ENCODE measurements at regions of chr21 and their contacts with region 1.

Region 1: DNA sequence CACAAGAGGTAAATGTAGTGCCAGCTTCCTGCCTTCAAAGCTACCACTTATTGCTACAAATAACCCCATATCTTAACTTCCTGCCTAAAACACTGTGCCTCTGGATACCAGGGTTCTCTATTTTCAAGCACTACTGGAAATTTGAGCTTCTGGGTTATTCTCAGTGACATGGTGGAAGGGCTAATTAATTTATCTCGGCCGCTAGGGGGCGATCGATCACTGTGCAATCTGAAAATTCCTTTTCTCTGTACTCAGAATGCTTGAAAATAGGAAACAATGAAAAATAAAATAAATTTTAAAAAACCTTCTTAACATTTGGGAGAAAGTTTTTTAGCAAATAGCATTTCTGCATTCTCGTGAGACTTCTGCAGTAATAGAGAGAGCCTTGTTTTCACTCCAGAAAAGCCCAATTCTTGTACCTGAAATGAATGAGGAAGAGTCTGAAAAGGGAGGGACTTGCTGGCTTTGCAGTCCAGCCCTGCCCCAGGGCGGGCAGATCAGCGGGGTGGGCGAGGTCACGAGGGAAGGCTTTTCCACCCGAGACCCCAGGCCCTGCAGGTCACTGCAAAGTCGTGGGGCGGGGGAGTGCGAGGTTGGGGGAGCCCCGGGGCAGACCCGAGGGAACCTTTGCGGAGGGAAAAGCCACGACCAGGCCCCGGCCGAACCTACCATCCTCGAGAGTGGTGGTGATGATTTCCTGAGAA is 276.7 kb downstream of the PCP4 start:
- DNase-seq: peak; percentile 55
- H3K4me3 ChIP-seq: no peak overlapping the region
- H3K27ac ChIP-seq: no peak overlapping the region
- H3K4me1 ChIP-seq: no peaks in the 10 kb centered on the region
- H3K27me3 ChIP-seq: no peaks in the 10 kb centered on the region
- CTCF ChIP-seq: peak; percentile 74

Region 2: DNA sequence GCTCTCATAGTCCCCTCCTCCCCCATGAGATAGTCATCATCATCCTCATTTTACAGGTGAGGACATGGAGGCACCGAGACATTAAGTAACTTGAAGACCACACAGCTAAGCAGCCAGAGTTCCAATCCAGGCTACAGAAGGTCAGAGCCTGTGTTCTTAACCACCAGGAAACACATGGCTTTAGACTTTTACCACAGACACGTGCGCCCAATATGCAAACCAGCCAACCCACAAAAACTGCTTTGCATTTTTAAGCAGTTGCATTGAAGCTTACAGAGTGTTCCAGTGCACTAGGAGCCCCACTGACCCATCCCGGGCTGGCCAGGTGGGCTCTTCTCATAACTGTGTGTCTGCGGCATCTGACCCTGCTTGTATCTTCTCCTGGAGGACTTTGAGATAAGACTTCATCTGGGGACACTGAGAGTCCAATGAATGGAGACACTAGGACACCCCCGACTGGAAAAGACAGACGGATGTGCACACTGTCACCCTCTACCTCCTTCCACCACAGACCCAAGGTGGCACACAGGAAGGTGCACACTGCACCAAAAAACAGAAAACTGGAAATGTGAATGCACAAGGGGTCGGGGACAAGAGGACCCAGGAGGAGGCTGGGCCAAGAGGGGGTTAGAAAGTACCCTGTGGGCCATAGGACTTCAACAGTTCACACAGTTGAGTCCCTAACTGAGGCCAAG is 1281.8 kb before region 1 on chr21:
- CTCF ChIA-PET with region 1: no interaction called
- POLR2A ChIA-PET with region 1: no interaction called
- intact Hi-C with region 1: no loop called
- DNase-seq: no peak
- H3K4me3 ChIP-seq: no peak overlapping the region
- H3K27ac ChIP-seq: no peak overlapping the region
- H3K4me1 ChIP-seq: no peaks in the 10 kb centered on the region
- H3K27me3 ChIP-seq: no peaks in the 10 kb centered on the region
- CTCF ChIP-seq: no peak

Region 3: DNA sequence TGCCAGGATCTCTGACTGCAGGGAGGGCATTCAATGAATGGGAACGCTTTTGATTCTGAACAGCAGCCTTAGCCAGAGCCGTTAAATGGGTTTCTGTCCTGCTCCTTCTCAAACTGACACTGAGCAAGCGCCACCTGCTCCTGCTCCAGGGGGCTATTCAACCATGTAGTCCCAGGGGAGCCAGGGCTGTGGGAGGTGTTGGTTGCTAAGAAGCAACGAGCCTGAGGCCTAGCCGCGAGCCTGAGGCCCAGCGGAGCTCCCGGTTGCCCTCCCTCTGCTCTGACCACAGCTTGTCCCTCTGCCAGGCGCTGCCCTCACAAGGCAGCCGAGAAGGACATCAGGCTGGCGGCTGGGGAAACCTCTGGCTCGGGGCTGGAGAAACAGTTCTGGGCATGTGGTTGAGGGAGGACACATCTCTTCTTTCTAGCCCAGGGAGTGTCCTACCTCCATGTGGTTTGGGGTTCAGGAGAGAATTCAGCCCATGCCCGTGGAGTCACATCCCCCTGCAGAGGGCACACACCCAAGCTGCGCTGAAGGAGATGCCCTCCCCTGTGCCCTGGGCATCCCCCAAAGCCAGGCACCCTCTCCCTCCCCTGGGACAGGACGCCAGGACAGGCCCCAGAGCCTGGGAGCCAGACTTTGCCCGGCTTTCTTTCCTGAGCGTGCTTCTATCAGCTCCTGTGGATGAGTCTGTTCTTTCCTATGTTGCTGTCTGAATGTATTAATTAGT is 258.7 kb before region 1 on chr21:
- CTCF ChIA-PET with region 1: no interaction called
- POLR2A ChIA-PET with region 1: no interaction called
- intact Hi-C with region 1: no loop called
- DNase-seq: no peak
- H3K4me3 ChIP-seq: no peak overlapping the region
- H3K27ac ChIP-seq: no peak overlapping the region
- H3K4me1 ChIP-seq: no peaks in the 10 kb centered on the region
- H3K27me3 ChIP-seq: peaks cover 26% of the 10 kb centered on the region
- CTCF ChIP-seq: no peak

Region 4: DNA sequence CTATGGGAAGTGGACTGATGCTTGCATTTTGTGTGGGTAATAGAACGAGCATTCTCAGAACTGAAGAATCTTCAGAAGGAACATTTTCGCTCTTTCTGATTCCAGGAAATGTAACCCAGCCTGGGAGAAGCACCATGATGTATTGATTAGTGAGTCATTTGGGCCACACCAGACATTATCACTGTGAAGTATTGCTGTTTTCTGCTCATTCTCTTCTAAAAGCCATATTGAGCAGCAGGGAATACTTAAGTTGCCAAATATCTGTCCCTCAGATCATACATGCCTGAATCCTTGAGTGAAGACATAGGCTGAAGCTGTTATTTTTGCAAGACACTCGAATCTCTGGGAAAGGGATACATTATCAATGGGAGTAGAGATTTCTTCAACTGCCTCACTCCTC is 63.6 kb before region 1 on chr21:
- CTCF ChIA-PET with region 1: no interaction called
- POLR2A ChIA-PET with region 1: no interaction called
- intact Hi-C with region 1: no loop called
- DNase-seq: no peak
- H3K4me3 ChIP-seq: no peak overlapping the region
- H3K27ac ChIP-seq: no peak overlapping the region
- H3K4me1 ChIP-seq: no peaks in the 10 kb centered on the region
- H3K27me3 ChIP-seq: no peaks in the 10 kb centered on the region
- CTCF ChIP-seq: no peak

Region 5: DNA sequence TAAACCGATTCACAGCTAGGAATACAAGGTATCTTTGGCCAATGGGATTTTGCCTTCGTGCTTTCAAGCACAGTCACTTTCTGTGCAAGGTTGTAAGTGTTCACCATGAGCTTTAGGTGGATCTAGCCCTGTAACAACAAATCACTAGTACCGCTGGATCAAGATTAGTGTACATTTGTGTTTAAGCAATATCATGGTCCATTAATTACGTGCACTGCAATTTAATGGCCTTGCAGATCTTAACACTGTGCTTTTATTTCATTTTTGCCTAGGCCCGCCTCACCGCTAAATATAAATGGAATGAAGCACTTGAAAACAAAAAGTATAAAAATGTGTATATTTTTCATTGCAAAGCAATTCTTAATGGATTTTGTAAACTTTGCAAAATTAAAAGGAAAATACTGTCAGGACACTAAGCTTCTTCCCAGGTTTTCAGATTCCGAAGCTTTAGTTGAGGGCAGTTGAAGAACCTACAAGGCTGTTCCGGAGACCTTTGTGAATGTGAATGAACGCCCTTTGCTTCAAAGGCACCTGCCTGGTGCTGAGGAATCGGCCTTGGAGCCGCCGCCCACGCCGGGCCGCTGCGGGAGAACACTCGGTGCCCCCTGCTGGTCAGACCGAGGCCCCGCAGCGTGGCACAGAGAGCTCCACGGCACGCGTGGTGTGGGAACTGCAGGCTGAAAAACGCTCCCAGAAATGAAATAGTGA is 242.1 kb after region 1 on chr21:
- CTCF ChIA-PET with region 1: interaction called, 5 read pairs
- POLR2A ChIA-PET with region 1: no interaction called
- intact Hi-C with region 1: loop called (anchors 5 kb)
- DNase-seq: peak; percentile 25
- H3K4me3 ChIP-seq: no peak overlapping the region
- H3K27ac ChIP-seq: no peak overlapping the region
- H3K4me1 ChIP-seq: no peaks in the 10 kb centered on the region
- H3K27me3 ChIP-seq: no peaks in the 10 kb centered on the region
- CTCF ChIP-seq: peak; percentile 63

Region 6: DNA sequence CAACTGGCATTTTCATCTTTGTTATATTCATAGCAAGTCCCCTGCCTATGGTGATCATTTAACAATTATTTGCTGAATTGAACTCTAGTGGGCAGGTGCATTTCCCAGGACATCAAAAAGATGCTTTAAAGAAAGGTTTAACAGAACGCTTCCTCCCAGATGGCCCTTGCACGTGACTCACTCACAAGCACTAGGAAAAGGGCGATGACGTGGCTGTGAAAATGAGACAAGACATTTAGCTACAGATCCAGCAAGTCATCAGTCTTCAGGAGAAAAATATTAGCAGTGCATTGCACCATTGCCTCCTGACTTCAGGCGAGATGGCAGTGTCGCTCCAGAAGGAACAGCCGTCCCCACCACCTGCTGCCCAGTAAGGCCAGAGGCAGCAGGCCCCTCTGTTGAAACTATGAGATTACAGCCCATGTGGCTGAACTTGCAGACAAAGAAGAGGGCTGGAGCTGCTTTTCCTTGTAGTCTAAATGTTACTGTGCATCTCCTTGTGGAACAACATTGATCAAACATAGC is 665.8 kb after region 1 on chr21:
- CTCF ChIA-PET with region 1: no interaction called
- POLR2A ChIA-PET with region 1: no interaction called
- intact Hi-C with region 1: no loop called
- DNase-seq: no peak
- H3K4me3 ChIP-seq: no peak overlapping the region
- H3K27ac ChIP-seq: no peak overlapping the region
- H3K4me1 ChIP-seq: no peaks in the 10 kb centered on the region
- H3K27me3 ChIP-seq: no peaks in the 10 kb centered on the region
- CTCF ChIP-seq: no peak

Region 7: DNA sequence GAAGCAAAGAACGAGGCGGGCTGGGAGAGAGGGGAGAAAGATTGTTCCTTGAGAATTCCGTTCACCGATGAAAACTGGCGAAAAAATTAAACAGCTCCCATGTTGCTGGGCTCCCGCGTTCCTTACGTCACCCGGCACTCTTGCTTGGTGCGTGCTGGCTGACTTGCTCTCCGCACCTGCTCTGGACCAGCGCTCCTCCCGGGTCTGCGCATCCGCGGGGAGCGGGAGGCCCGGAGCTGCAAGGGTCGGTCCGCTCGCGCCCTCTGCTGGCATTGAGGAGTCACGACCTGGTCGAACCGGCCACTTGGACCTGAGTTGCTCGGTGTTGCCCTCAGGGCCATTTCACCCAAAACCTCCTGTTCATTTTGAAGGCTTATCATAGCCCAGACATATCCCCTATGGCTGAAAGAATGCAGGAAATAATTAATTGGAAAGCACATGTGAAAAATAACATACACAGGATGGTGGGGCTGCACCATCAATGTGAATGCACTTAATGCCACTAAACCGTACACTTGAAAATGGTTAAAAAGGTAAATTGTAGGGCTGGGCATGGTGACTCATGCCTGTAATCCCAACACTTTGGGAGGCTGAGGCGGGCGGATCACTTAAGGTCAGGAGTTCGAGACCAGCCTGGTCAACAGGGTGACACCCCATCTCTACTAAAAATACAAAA is 925.1 kb after region 1 on chr21:
- CTCF ChIA-PET with region 1: no interaction called
- POLR2A ChIA-PET with region 1: no interaction called
- intact Hi-C with region 1: loop called (anchors 5 kb)
- DNase-seq: peak; percentile 56
- H3K4me3 ChIP-seq: no peak overlapping the region
- H3K27ac ChIP-seq: no peak overlapping the region
- H3K4me1 ChIP-seq: no peaks in the 10 kb centered on the region
- H3K27me3 ChIP-seq: no peaks in the 10 kb centered on the region
- CTCF ChIP-seq: peak; percentile 75

Region 8: GRCh38 chr21:41133896-41134522 is 990.0 kb after region 1 on chr21:
- CTCF ChIA-PET with region 1: no interaction called
- POLR2A ChIA-PET with region 1: no interaction called
- intact Hi-C with region 1: loop called (anchors 10 kb)
- DNase-seq: peak; percentile 8
- H3K4me3 ChIP-seq: no peak overlapping the region
- H3K27ac ChIP-seq: no peak overlapping the region
- H3K4me1 ChIP-seq: no peaks in the 10 kb centered on the region
- H3K27me3 ChIP-seq: no peaks in the 10 kb centered on the region
- CTCF ChIP-seq: peak; percentile 48

Measured in A673 (cell line).